Activated T-helper 1 cell treated with anti-CD3 and anti-CD28 coated beads, Interleukin-12 subunit alpha, Interleukin-12 subunit beta, Interleukin-2, Interleukin-4 antibody, amounts not matched to agents 30 ng/mL and 10 ng/mL and 1 ng/mL, durations not matched to agents 14 hours and 24 hours and 36 hours (primary cell): ENCODE measurements at regions of chr12 and their contacts with region 1.

Region 1: DNA sequence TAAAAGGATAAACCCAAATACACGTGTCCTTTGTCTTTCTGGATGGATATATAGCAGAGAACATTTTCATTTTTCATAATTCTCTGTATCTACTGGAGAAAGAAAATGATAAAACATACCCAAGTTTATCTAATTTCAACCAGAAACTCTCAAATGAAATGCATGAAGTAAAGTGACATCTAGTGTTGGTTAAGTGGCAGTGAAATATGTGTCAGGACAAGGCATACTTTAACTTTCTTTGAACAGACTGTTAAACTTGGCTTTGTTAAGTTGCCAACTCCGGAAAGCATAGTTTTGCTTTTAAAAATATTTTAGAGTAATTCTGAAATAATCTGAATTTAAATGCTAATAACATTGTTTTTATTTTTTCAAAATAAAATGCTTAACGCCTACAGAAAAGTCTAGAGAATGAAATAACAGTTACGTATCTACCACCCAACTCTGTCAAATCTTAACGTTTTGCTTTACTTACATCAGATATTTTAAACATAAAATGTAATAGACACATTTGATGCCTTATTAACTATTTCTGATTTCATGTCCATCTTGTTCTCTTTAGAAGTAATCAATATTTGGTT is 25.2 kb upstream of the NTN4 start:
- DNase-seq: no peak
- H3K4me3 Mint-ChIP-seq: no peak overlapping the region
- H3K27ac Mint-ChIP-seq: no peak overlapping the region
- H3K4me1 Mint-ChIP-seq: no peaks in the 10 kb centered on the region
- H3K27me3 Mint-ChIP-seq: peaks cover 29% of the 10 kb centered on the region

Region 2: DNA sequence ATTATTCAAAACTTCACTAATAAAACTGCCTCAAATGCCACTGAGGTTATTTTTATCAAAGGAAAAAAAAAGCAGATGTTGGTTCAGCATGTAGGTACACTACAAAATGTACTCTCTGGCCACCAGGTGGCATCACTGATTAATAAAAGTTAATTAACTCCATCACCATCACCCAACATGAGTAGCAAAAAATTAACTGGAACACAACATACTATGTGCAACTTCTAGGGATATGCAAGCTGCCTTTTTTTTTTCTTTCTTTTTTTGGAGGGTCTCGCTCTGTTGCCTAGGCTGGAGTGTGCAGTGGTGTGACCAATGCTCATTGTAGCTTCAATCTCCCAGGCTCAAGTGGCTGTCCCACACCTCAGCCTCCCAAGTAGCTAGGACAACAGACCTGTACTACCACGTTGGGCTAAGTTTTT is 698.5 kb before region 1 on chr12:
- intact Hi-C with region 1: loop called (anchors 1 kb)
- DNase-seq: peak; percentile 26
- H3K4me3 Mint-ChIP-seq: no peak overlapping the region
- H3K27ac Mint-ChIP-seq: no peak overlapping the region
- H3K4me1 Mint-ChIP-seq: no peaks in the 10 kb centered on the region
- H3K27me3 Mint-ChIP-seq: no peaks in the 10 kb centered on the region

Region 3: GRCh38 chr12:95428472-95428871 is 387.3 kb before region 1 on chr12:
- intact Hi-C with region 1: no loop called
- DNase-seq: peak; percentile 16
- H3K4me3 Mint-ChIP-seq: no peak overlapping the region
- H3K27ac Mint-ChIP-seq: peak overlapping the region; percentile 6
- H3K4me1 Mint-ChIP-seq: peaks cover 6% of the 10 kb centered on the region
- H3K27me3 Mint-ChIP-seq: peaks cover 2% of the 10 kb centered on the region

Region 4: DNA sequence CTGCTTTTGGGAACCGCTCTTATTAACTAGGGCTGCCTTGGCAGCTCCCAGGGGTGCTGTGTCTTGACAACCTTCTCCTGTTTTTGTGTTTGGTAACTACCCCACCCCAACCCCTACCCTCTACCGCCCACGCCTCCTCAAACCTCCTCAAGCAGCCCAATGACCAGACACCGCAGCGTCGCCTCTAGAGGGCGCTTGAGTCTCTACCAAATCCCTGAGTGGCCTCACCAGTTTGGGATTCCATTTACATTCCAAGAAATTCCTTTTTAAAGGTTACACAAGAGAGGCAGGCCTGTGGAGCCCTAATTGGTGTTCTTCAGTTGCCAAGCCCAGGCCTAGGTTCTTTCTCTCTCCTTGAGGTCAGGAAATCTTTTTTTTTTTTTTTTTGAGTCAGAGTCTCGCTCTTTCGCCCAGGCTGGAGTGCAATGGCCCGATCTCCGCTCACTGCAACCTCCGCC is 192.1 kb before region 1 on chr12:
- intact Hi-C with region 1: loop called (anchors 2 kb)
- DNase-seq: no peak
- H3K4me3 Mint-ChIP-seq: no peak overlapping the region
- H3K27ac Mint-ChIP-seq: no peak overlapping the region
- H3K4me1 Mint-ChIP-seq: no peaks in the 10 kb centered on the region
- H3K27me3 Mint-ChIP-seq: peaks cover 2% of the 10 kb centered on the region

Region 5: GRCh38 chr12:95829395-95829794 is 13.7 kb after region 1 on chr12:
- intact Hi-C with region 1: no loop called
- DNase-seq: no peak
- H3K4me3 Mint-ChIP-seq: no peak overlapping the region
- H3K27ac Mint-ChIP-seq: no peak overlapping the region
- H3K4me1 Mint-ChIP-seq: no peaks in the 10 kb centered on the region
- H3K27me3 Mint-ChIP-seq: peaks cover 15% of the 10 kb centered on the region